ENCODE measurements at regions of chr1 and their contacts with region 1.

Region 1: DNA sequence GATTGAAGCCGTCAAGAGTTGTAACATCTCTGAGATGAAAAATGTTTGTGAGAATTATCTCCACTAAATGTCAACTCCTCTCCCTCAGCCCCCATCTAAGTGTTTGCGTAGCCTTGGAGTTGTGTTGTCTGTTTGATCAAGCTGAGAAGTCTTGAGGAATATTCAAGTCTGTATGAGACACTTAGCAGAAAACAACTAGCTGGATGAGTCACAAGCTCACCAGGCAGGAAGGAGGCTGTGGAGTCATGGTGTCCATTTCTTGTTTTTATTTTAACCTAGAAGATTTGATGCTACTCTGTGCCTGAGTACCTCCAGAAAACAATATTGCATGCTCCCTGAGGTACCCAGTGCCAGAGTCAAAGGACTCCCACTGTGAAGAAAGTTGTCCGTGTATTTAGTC is 211.6 kb upstream of the PLXNA2 start:
- DNase-seq: no peak
- ATAC-seq: no peak
- H3K4me3 ChIP-seq: no peak overlapping the region
- H3K27ac ChIP-seq: no peak overlapping the region
- H3K4me1 ChIP-seq: no peaks in the 10 kb centered on the region
- H3K27me3 ChIP-seq: no peaks in the 10 kb centered on the region
- CTCF ChIP-seq: no peak
- EP300 ChIP-seq: no peak
- POLR2A ChIP-seq: no peak
- RAD21 ChIP-seq: no peak

Region 2: DNA sequence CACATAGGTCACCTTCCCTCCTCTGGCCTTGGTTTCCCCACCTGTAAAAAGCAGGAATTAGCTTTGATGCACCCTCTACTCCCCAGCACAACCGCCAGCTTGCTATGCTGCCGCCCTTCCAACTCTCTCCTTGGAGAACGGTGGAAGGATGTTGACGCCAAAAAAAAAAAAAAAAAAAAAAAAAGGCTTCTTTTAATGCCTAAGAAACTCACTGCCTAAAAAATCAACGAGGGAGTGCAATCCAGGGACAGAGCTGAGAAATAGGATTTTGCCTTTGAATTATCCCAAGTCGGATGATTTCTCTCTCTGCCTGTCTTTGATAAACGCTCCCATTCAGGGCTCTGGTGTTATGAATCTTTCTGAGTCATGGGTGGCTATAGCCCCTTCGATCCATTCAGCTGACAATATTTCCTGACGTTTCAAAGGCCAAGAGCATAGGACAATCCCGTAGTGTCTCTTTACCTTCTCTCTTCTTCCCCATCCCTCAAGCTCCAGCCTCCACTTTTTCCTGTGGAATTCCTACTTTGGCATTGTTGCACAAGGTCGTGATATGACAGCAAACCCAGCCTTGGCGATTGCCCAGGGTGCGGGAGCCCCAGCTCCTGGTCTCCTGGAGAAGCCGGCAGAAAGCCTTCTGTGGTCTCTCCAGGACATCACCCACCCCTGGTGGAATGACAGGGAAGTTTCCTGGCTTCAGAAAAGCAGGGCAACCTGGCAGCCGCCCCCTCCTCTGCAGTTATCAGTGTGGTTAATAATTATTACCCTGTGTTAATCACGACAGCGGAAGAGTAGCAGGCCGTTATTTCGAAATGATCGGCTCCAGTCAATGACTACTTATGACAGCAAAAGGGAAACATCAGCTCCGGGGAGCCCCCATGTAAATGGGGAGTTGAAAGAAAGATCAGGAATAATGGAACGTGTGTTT is 203.6 kb before region 1 on chr1:
- CTCF ChIA-PET with region 1: no interaction called
- POLR2A ChIA-PET with region 1: no interaction called
- in situ Hi-C with region 1: no loop called
- intact Hi-C with region 1: loop called (anchors 10 kb)
- DNase-seq: peak; percentile 38 to 59 (median 55)
- ATAC-seq: peak; percentile 79
- H3K4me3 ChIP-seq: no peak overlapping the region
- H3K27ac ChIP-seq: no peak overlapping the region
- H3K4me1 ChIP-seq: no peaks in the 10 kb centered on the region
- H3K27me3 ChIP-seq: peaks cover 36 to 47% of the 10 kb centered on the region in 2 experiments
- CTCF ChIP-seq: peak; percentile 53 to 55 (median 55); a peak in 4 of 6 replicates
- EP300 ChIP-seq: no peak
- POLR2A ChIP-seq: no peak
- RAD21 ChIP-seq: peak; percentile 19 to 60; a peak in 2 of 4 replicates

Region 3: GRCh38 chr1:208465778-208466590 is 10.2 kb after region 1 on chr1:
- CTCF ChIA-PET with region 1: no interaction called
- POLR2A ChIA-PET with region 1: no interaction called
- in situ Hi-C with region 1: no loop called
- intact Hi-C with region 1: no loop called
- DNase-seq: no peak
- ATAC-seq: no peak
- H3K4me3 ChIP-seq: no peak overlapping the region
- H3K27ac ChIP-seq: no peak overlapping the region
- H3K4me1 ChIP-seq: no peaks in the 10 kb centered on the region
- H3K27me3 ChIP-seq: no peaks in the 10 kb centered on the region; a peak in 2 of 5 replicates
- CTCF ChIP-seq: no peak
- EP300 ChIP-seq: no peak
- POLR2A ChIP-seq: no peak
- RAD21 ChIP-seq: no peak

Region 4: GRCh38 chr1:208476340-208477041 is 20.7 kb after region 1 on chr1:
- CTCF ChIA-PET with region 1: no interaction called
- POLR2A ChIA-PET with region 1: no interaction called
- in situ Hi-C with region 1: no loop called
- intact Hi-C with region 1: no loop called
- DNase-seq: no peak
- ATAC-seq: peak; percentile 32; the same call in 2 of the 3 replicates
- H3K4me3 ChIP-seq: no peak overlapping the region
- H3K27ac ChIP-seq: no peak overlapping the region
- H3K4me1 ChIP-seq: no peaks in the 10 kb centered on the region
- H3K27me3 ChIP-seq: no peaks in the 10 kb centered on the region
- CTCF ChIP-seq: no peak
- EP300 ChIP-seq: no peak
- POLR2A ChIP-seq: no peak
- RAD21 ChIP-seq: no peak

Region 5: DNA sequence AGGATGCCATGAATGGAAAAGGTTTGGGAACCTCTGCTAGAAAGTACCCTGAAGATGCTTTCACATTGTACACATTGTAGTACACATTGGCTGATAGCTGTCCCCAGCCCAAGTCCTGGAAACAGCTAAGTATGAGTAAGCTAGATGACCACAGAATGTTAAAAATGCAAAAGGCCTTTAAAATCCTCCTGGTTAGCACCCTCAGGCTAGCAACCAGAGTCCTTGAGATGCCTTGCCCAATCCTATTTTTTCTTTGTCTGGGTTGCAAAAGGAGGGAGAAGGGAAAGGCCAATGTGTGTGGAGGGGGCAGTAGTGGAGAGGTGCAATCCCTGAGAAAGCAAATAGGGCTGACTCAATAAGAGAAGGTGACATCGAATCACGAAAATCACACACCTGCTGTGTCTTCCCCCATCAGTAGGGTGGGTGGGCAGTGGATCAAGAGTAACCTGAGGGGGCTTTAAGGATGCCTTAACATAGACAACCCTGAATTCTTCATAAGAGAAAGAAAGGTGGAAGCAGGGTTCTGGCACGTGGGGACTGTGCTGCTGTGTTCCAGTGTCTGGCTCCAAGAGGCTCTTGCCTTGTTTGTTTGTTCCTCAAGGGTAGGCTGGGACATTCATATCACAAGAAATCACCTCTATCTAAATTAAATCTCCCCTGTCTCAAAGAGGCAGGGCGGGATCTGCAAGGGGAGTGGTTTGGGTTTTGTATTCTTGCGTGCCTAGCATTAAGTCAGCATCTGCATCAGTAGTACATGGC is 54.6 kb after region 1 on chr1:
- CTCF ChIA-PET with region 1: no interaction called
- POLR2A ChIA-PET with region 1: no interaction called
- in situ Hi-C with region 1: no loop called
- intact Hi-C with region 1: no loop called
- DNase-seq: no peak
- ATAC-seq: no peak
- H3K4me3 ChIP-seq: no peak overlapping the region
- H3K27ac ChIP-seq: no peak overlapping the region
- H3K4me1 ChIP-seq: no peaks in the 10 kb centered on the region
- H3K27me3 ChIP-seq: no peaks in the 10 kb centered on the region; a peak in 1 of 5 replicates
- CTCF ChIP-seq: no peak
- EP300 ChIP-seq: no peak
- POLR2A ChIP-seq: no peak
- RAD21 ChIP-seq: no peak

Region 6: DNA sequence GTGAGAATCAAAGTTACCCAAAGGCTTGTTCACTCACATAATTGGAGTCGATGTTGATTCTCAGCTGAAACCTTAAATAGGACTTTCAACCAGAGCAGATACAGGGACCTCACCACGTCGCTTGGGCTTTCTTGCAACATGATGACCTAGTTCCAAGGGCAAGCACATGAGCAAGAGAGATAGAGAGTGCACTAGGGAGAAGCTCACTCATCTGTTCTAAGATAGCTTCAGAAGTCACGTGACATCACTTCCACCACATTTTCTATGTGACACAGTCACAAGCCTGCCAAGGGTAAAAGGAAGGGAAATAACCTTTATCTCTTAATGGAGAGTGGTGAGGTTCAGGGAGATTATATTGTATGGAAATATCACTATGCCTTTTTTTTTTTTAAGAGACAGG is 258.5 kb after region 1 on chr1:
- CTCF ChIA-PET with region 1: no interaction called
- POLR2A ChIA-PET with region 1: no interaction called
- in situ Hi-C with region 1: no loop called
- intact Hi-C with region 1: no loop called
- DNase-seq: no peak
- ATAC-seq: no peak
- H3K4me3 ChIP-seq: no peak overlapping the region
- H3K27ac ChIP-seq: no peak overlapping the region
- H3K4me1 ChIP-seq: no peaks in the 10 kb centered on the region
- H3K27me3 ChIP-seq: no peaks in the 10 kb centered on the region
- CTCF ChIP-seq: no peak
- EP300 ChIP-seq: no peak
- POLR2A ChIP-seq: no peak
- RAD21 ChIP-seq: no peak

Measured in K562 (cell line).